PC-3 (cell line): ENCODE measurements at regions of chr7 and their contacts with region 1.

Region 1: DNA sequence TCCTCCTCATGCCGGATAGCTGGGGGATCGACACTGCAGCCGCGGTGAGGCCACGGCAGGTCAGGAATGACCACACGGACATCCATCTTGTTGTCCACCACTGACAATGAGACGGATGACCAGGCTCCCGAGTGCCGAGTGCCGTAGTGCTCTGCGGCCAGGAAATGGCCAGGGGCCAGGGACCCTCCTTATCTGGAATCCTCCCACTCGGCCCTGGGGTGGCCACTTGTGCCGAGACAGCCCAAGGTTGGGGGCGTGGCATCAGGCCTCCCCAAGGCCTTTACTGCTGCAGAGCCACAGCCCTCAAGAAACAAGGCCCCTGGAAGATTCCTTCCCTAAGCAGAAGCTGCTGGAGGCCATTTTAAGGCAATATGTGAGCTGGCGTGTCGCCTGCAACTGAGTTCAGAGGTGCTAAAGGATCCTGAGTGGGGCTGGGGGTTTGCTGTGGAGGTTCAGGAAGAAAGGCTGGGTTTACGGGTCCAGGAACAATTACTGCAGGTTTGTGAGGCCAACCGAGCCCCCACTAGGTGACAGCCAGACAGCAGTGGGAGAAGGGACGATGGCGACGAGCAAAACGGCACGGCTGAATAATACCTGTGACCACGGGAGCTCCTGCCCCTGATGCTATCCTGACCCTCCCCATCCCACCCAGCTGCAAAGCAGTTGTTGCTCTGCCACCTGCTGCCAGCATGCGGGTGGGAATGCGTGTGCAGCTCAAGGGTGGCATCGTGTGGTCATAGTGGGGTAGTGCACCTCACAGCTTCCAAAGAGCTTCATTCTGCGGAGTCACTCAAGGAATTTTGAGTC is 31.6 kb upstream of the LEP start:
- DNase-seq: peak; percentile 85
- ATAC-seq: peak; percentile 61
- H3K4me3 ChIP-seq: no peak overlapping the region
- H3K27ac ChIP-seq: no peak overlapping the region
- H3K4me1 ChIP-seq: peaks cover 11% of the 10 kb centered on the region; the same call in 1 of the 2 replicates
- H3K27me3 ChIP-seq: no peaks in the 10 kb centered on the region
- CTCF ChIP-seq: peak; percentile 93

Region 2: DNA sequence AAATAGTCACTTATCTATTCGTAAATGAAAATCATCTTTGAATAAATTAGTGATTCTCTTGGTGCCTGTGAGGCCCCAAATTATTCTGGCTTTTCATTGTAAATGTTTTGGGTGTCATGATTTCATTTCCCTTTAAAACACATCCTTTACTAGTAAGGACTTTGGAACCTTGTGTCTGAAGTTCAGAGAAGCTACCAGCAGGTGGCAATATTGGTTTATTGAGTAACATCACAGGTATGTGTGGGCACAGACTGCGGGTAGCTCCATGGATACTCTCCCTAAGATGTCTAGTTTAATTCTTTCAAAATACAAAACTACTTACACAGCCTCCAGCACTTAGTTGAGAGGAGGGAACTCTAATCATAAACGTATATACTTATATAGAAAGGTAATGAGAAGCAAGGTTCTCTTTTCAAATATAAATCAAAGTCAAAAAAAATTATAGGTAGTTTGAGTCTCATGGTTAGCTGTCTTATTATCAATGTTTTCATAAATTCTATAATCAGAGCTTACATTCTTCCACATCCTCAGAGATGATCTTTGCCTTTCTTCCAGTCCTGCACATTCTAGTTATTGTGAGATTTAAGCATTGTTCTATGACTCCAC is 1406.3 kb before region 1 on chr7:
- CTCF ChIA-PET with region 1: no interaction called
- POLR2A ChIA-PET with region 1: no interaction called
- intact Hi-C with region 1: loop called (anchors 5 kb)
- DNase-seq: peak; percentile 78
- ATAC-seq: peak; percentile 92
- H3K4me3 ChIP-seq: no peak overlapping the region
- H3K27ac ChIP-seq: no peak overlapping the region
- H3K4me1 ChIP-seq: no peaks in the 10 kb centered on the region
- H3K27me3 ChIP-seq: no peaks in the 10 kb centered on the region
- CTCF ChIP-seq: peak; percentile 82

Region 3: DNA sequence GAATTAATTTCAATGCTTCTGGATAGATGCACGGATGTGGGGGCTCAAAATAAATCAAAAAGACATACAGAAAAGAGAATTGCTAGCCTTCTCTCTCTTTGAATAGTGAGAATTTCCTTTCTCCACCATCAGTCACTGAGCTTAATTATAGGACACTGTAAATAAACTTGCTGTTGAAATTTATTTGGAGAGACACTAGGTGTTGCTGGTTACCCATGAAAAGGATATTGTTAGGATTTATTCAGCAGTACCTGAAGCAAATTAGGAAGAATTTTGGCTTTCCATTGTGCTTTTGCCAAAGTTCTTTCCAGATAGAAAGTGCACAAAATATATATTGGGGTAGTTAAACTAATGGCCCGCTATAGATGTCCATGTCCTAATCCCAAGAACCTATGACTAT is 651.6 kb before region 1 on chr7:
- CTCF ChIA-PET with region 1: interaction called, 10 read pairs
- POLR2A ChIA-PET with region 1: no interaction called
- intact Hi-C with region 1: no loop called
- DNase-seq: no peak
- ATAC-seq: no peak
- H3K4me3 ChIP-seq: no peak overlapping the region
- H3K27ac ChIP-seq: no peak overlapping the region
- H3K4me1 ChIP-seq: 0 out of 2 replicates have a peak, but pooled peaks cover 5% of the 10 kb centered on the region
- H3K27me3 ChIP-seq: no peaks in the 10 kb centered on the region
- CTCF ChIP-seq: no peak

Region 4: DNA sequence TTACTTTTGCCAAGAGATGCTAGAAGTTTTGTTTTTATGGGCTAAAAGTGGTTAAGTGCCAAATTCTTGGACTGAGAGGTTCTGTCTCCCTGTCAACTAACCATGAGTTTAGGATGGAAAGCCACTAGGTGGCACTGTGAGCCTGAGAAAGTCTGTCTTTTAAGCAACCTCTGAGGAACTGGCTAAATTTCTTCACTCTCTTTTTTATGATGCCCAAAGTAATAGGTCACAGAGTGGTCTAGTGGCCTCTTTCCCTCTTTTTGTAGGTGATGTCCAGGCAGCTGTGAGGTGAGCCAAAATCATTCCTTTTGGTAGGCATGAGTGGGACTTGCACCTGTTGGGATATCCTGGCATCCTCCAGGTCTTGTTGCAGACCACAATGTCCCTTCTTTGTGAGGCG is 500.6 kb before region 1 on chr7:
- CTCF ChIA-PET with region 1: interaction called, 4 read pairs
- POLR2A ChIA-PET with region 1: no interaction called
- intact Hi-C with region 1: loop called (anchors 10 kb)
- DNase-seq: peak; percentile 80
- ATAC-seq: peak; percentile 53
- H3K4me3 ChIP-seq: no peak overlapping the region
- H3K27ac ChIP-seq: no peak overlapping the region
- H3K4me1 ChIP-seq: peaks cover 15% of the 10 kb centered on the region
- H3K27me3 ChIP-seq: no peaks in the 10 kb centered on the region
- CTCF ChIP-seq: peak; percentile 75

Region 5: DNA sequence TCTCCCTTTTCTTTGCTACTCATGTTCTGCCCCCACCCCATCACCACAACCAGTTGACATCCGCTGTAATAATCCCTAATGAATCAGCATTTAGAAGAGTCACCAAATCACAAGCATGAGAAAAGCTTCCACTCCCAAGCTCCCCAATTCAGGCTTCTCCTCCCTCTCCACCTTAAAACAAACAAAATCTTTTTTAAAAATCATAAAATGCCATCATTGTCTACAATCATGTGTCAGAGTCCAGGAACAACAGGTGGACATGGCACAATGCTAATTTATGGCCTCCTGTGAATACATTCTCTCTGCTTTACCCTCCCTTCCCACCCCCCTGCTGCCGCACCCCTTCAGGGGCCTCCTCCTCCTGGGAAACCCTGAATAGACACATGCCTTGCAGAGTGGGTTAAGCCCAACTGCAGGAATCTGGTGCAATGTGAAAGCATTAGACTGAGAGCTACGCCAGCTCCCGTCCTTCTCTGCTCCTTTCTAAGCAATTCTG is 181.9 kb before region 1 on chr7:
- CTCF ChIA-PET with region 1: interaction called, 15 read pairs
- POLR2A ChIA-PET with region 1: no interaction called
- intact Hi-C with region 1: no loop called
- DNase-seq: peak; percentile 55
- ATAC-seq: peak; percentile 43
- H3K4me3 ChIP-seq: no peak overlapping the region
- H3K27ac ChIP-seq: peak overlapping the region; percentile 92
- H3K4me1 ChIP-seq: peaks cover 49% of the 10 kb centered on the region
- H3K27me3 ChIP-seq: no peaks in the 10 kb centered on the region
- CTCF ChIP-seq: no peak

Region 6: GRCh38 chr7:128135515-128136214 is 73.8 kb before region 1 on chr7:
- CTCF ChIA-PET with region 1: interaction called, 55 read pairs
- POLR2A ChIA-PET with region 1: no interaction called
- intact Hi-C with region 1: loop called (anchors 1 kb)
- DNase-seq: peak; percentile 51
- ATAC-seq: peak; percentile 90
- H3K4me3 ChIP-seq: peak overlapping the region; percentile 70
- H3K27ac ChIP-seq: no peak overlapping the region
- H3K4me1 ChIP-seq: peaks cover 6% of the 10 kb centered on the region
- H3K27me3 ChIP-seq: peaks cover 26% of the 10 kb centered on the region
- CTCF ChIP-seq: peak; percentile 70; the same call in 1 of the 2 replicates

Region 7: DNA sequence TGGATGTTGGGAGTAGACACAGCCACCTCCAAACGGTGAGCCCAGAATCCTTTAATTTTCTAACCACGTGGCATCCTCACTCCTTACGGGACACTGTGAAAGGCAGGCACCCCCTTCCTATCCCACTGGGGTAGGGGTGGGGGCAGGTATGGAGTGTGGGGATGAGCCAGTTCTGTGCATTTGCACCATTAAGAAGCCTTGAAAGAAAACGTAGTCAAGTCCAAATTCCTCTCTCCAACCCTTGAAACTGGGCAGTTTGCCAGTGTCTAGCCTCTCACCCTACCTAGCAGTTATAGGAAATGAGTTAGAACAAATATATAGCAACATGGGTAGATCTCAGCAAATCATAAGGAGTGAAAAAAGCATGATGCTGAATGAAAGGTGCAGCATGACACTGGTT is 60.8 kb before region 1 on chr7:
- CTCF ChIA-PET with region 1: no interaction called
- POLR2A ChIA-PET with region 1: no interaction called
- intact Hi-C with region 1: no loop called
- DNase-seq: peak; percentile 16
- ATAC-seq: no peak
- H3K4me3 ChIP-seq: no peak overlapping the region
- H3K27ac ChIP-seq: no peak overlapping the region
- H3K4me1 ChIP-seq: no peaks in the 10 kb centered on the region
- H3K27me3 ChIP-seq: peaks cover 21% of the 10 kb centered on the region
- CTCF ChIP-seq: no peak